Calu3 (cell line): ENCODE measurements at regions of chr9 and their contacts with region 1.

Region 1: DNA sequence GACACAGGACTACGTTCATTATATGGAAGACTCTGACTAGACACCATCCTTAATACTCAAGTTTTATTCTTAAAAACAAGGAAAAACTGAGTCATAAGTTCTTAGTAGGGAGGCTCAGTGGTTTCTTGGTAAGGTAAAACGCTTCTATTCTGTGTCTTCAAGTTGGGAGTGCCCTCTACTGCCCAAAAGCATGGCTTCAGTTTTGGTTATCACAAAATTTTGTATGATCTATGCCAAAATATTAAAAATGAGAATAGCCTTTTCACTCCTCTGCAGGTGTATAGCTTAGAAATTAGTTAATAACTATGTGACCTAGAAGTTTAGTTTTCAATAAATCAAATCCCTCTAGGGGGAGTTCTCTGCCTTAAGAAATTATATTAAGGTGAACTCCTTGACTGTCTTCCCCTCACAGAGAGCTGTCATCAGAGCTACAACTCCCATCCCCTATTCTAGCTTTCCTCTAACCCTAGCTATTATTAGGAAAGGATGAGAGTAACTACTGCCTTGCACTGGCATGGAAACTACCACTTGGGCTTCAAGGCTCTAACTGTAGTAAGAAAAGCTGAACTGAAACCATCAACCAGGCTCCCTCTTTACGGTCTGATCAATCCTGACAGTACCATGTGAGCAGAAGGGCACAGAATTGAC is 189.7 kb downstream of the GNAQ start:
- DNase-seq: no peak
- H3K4me3 Mint-ChIP-seq: no peak overlapping the region
- H3K27ac Mint-ChIP-seq: no peak overlapping the region
- H3K4me1 Mint-ChIP-seq: peaks cover 23% of the 10 kb centered on the region
- H3K27me3 Mint-ChIP-seq: no peaks in the 10 kb centered on the region
- CTCF ChIP-seq: no peak

Region 2: GRCh38 chr9:78035383-78035993 is 193.6 kb after region 1 on chr9:
- CTCF ChIA-PET with region 1: no interaction called
- intact Hi-C with region 1: loop called (anchors 2 kb)
- DNase-seq: peak; percentile 47
- H3K4me3 Mint-ChIP-seq: no peak overlapping the region
- H3K27ac Mint-ChIP-seq: no peak overlapping the region
- H3K4me1 Mint-ChIP-seq: peaks cover 20% of the 10 kb centered on the region
- H3K27me3 Mint-ChIP-seq: no peaks in the 10 kb centered on the region
- CTCF ChIP-seq: no peak

Region 3: GRCh38 chr9:78769690-78770089 is 927.8 kb after region 1 on chr9:
- CTCF ChIA-PET with region 1: no interaction called
- intact Hi-C with region 1: no loop called
- DNase-seq: no peak
- H3K4me3 Mint-ChIP-seq: no peak overlapping the region
- H3K27ac Mint-ChIP-seq: no peak overlapping the region
- H3K4me1 Mint-ChIP-seq: no peaks in the 10 kb centered on the region
- H3K27me3 Mint-ChIP-seq: peaks cover 10% of the 10 kb centered on the region
- CTCF ChIP-seq: no peak